Cardiac septum (tissue), 1 donor: ENCODE measurements at regions of chr6 and their contacts with region 1.

Region 1: DNA sequence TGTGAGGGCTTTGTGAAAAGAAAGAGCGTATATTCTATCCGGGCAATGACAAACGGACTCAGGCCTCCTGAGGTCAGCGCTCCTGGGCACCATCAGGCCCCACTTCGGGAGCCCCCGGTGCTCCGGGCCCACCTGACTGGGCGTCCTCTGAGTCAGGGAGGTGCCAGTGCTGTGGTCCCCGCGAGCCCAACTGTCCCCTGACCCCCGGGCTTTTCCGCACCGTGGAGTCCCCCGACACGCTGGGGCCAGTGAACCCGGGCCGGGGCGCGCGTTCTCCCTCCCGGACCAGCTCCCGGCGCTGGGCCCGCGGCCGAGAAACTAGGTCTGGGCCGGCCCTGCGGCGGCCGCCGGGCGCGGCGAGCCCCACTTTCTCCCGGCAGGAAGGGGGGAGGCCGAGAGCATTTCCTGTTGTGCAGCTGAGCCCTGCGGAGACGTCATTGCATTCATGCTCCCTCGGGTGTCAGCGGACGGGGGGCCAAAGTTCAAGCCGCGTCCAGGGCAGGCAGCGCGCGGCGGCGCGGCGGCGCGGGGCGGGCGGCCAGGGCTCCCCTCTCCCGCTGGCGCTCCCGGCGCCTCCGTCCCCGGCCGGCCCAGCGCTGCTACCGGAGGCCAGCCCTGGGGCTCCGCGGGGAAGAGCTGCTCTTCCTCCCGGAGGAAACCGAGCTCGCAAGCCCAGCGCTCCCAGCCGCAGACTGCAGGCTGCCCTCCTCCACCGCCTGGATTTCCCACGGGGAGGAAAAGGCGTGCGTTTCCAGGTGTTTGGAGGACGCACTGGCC is 18.3 kb downstream of the HIVEP2 start:
- DNase-seq: peak; percentile 94

Region 2: GRCh38 chr6:142902636-142903053 is 24.0 kb before region 1 on chr6:
- intact Hi-C with region 1: loop called (anchors 2 kb)
- DNase-seq: peak; percentile 81